ENCODE measurements at regions of chr1 and their contacts with region 1.

Region 1: GRCh38 chr1:15152318-15153183 is 996 bp upstream of the TMEM51 start:
- DNase-seq: peak; percentile 87 to 89
- ATAC-seq: peak; percentile 75 to 77
- H3K4me3 ChIP-seq: peak overlapping the region; percentile 88
- H3K27ac ChIP-seq: peak overlapping the region; percentile 93 to 99
- H3K4me1 ChIP-seq: peaks cover 35% of the 10 kb centered on the region
- CTCF ChIP-seq: peak; percentile 66
- EP300 ChIP-seq: no peak
- POLR2A ChIP-seq: no peak
- RAD21 ChIP-seq: peak; percentile 78 to 88

Region 2: GRCh38 chr1:15028102-15028501 is 124.4 kb before region 1 on chr1:
- CTCF ChIA-PET with region 1: no interaction called
- POLR2A ChIA-PET with region 1: no interaction called
- DNase-seq: peak in 1 of 2 experiments; percentile 9
- ATAC-seq: no peak; a peak in 1 of 6 replicates
- H3K4me3 ChIP-seq: no peak overlapping the region
- H3K27ac ChIP-seq: no peak overlapping the region
- H3K4me1 ChIP-seq: no peaks in the 10 kb centered on the region
- CTCF ChIP-seq: no peak
- EP300 ChIP-seq: no peak
- POLR2A ChIP-seq: no peak
- RAD21 ChIP-seq: no peak

Region 3: DNA sequence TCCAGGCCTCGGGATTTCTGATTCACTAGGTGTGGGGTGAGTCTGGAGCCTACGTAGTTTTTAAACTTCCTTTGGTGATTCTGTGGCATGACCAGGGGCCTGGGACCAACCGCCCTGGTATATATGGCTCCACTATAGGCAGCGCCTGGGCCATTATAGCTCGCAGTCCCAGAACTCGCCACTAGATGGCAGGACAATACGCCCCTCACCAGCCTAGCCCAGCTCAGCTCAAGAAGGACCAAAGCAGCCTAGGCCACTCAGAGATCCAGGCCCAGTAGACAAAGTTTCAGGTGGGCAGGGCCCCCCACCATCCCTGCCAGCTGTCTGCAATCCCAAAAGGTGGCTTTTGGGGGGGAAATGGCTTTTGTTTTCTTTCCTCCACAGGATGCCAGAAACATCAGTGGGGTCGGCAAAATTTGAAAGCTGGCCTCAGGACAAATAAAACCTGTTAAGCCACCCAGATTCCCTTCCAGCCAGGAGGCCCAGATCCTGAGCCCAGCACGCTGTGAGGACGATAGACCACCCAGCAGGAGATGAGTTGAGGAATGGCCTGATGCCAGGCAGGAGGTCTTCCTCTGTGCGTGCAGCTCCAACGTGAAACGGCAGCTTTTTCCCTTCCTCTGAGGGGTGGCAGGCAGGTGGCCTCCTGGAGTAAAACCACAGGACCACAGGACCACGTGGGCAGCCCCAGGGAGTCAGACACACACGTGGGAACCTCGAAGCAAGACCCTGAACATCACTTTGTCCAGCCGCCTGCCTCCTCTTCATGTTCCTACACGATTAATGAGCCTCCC is 23.8 kb before region 1 on chr1:
- CTCF ChIA-PET with region 1: interaction called, 32 read pairs
- POLR2A ChIA-PET with region 1: no interaction called
- DNase-seq: peak; percentile 67 to 70
- ATAC-seq: peak; percentile 97 to 100
- H3K4me3 ChIP-seq: no peak overlapping the region
- H3K27ac ChIP-seq: peak overlapping the region in 1 of 2 experiments; percentile 51; a peak in 3 of 6 replicates
- H3K4me1 ChIP-seq: no peaks in the 10 kb centered on the region
- CTCF ChIP-seq: peak; percentile 72
- EP300 ChIP-seq: no peak
- POLR2A ChIP-seq: no peak
- RAD21 ChIP-seq: peak; percentile 80 to 87

Region 4: DNA sequence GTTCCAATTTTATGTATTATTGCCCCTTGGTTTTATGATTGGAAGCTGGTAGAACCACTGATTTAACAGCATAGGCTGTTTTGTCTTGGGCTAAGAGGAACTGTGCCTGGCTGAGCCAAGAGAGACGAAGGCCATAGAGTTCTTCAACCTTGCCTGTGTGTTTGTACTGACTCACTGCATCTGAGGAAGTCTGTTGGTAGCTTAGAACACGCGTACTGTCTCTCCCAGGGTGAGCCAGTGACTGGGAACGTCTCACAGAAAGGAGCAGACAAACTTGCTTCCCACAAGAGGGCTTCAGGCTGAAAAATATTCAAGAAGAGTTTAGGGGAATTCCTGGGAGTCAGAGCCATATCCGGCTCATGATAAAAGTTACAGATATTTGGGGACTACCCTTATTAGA is 15.9 kb after region 1 on chr1:
- CTCF ChIA-PET with region 1: interaction called, 35 read pairs
- POLR2A ChIA-PET with region 1: interaction called, 4 read pairs
- DNase-seq: peak in 1 of 2 experiments; percentile 86
- ATAC-seq: peak; percentile 94 to 97
- H3K4me3 ChIP-seq: no peak overlapping the region
- H3K27ac ChIP-seq: peak overlapping the region; percentile 80 to 87
- H3K4me1 ChIP-seq: peaks cover 73% of the 10 kb centered on the region
- CTCF ChIP-seq: peak; percentile 19; the same call in 1 of the 3 replicates
- EP300 ChIP-seq: peak in 1 of 2 experiments; percentile 32; a peak in 1 of 5 replicates
- POLR2A ChIP-seq: no peak
- RAD21 ChIP-seq: peak in 1 of 2 experiments; percentile 15; a peak in 2 of 5 replicates

Region 5: GRCh38 chr1:15188130-15188524 is 35.6 kb after region 1 on chr1:
- CTCF ChIA-PET with region 1: interaction called, 28 read pairs
- POLR2A ChIA-PET with region 1: no interaction called
- DNase-seq: no peak
- ATAC-seq: peak in 1 of 2 experiments; percentile 29; a peak in 3 of 6 replicates
- H3K4me3 ChIP-seq: no peak overlapping the region
- H3K27ac ChIP-seq: peak overlapping the region; percentile 91 to 92
- H3K4me1 ChIP-seq: peaks cover 77% of the 10 kb centered on the region
- CTCF ChIP-seq: no peak
- EP300 ChIP-seq: no peak
- POLR2A ChIP-seq: no peak
- RAD21 ChIP-seq: no peak

Region 6: GRCh38 chr1:15206418-15207030 is 54.0 kb after region 1 on chr1:
- CTCF ChIA-PET with region 1: interaction called, 78 read pairs
- POLR2A ChIA-PET with region 1: interaction called, 4 read pairs
- DNase-seq: no peak
- ATAC-seq: peak in 1 of 2 experiments; percentile 30; a peak in 3 of 6 replicates
- H3K4me3 ChIP-seq: no peak overlapping the region
- H3K27ac ChIP-seq: peak overlapping the region; percentile 24 to 72; a peak in 4 of 6 replicates
- H3K4me1 ChIP-seq: peaks cover 43% of the 10 kb centered on the region
- CTCF ChIP-seq: no peak
- EP300 ChIP-seq: no peak
- POLR2A ChIP-seq: no peak
- RAD21 ChIP-seq: no peak

Region 7: GRCh38 chr1:15251857-15252835 is 99.6 kb after region 1 on chr1:
- CTCF ChIA-PET with region 1: interaction called, 12 read pairs
- POLR2A ChIA-PET with region 1: no interaction called
- DNase-seq: no peak
- ATAC-seq: no peak
- H3K4me3 ChIP-seq: no peak overlapping the region
- H3K27ac ChIP-seq: no peak overlapping the region
- H3K4me1 ChIP-seq: no peaks in the 10 kb centered on the region
- CTCF ChIP-seq: no peak
- EP300 ChIP-seq: no peak
- POLR2A ChIP-seq: no peak
- RAD21 ChIP-seq: no peak

Region 8: DNA sequence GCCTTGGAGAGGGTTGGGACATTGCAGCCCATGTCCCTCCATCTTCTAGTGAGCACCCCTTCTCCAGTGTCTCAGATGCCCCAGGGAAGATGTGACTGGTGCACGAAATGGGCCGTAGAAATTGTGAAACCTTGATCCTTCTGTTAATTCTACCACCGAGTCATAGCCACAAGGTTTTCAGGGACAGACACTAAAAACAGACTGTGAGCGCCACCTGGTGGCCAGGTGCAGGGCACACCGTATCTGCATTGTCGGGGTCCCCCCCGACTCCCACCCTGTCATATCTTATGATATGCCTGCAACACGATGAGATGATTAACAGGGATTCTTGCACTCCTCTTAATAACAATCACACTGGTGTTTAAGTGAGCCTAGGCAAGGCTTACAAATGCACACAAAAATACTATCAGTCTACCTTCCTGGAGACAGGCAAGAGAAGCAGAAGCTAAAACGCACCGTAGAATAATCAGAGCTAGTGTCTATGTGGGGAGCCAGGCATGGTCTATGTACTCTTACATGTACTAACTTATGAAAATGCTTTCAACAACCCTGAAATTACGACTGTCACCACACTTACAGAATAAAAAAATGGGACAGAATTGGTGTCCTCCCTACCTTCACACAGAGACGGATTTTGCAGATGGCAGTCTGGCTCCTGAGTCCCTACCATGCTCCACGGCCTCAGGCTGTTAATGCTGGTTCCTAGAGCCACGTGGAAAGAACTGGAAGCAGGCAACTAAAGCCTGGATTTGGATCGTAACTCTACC is 152.3 kb after region 1 on chr1:
- CTCF ChIA-PET with region 1: interaction called, 12 read pairs
- POLR2A ChIA-PET with region 1: no interaction called
- DNase-seq: peak; percentile 46 to 52
- ATAC-seq: peak; percentile 71 to 94
- H3K4me3 ChIP-seq: no peak overlapping the region
- H3K27ac ChIP-seq: peak overlapping the region; percentile 44 to 80; a peak in 4 of 6 replicates
- H3K4me1 ChIP-seq: peaks cover 6% of the 10 kb centered on the region; the same call in 2 of the 3 replicates
- CTCF ChIP-seq: peak; percentile 84
- EP300 ChIP-seq: no peak
- POLR2A ChIP-seq: no peak
- RAD21 ChIP-seq: peak; percentile 81 to 92